ENCODE measurements at regions of chr17 and their contacts with region 1.

Region 1: DNA sequence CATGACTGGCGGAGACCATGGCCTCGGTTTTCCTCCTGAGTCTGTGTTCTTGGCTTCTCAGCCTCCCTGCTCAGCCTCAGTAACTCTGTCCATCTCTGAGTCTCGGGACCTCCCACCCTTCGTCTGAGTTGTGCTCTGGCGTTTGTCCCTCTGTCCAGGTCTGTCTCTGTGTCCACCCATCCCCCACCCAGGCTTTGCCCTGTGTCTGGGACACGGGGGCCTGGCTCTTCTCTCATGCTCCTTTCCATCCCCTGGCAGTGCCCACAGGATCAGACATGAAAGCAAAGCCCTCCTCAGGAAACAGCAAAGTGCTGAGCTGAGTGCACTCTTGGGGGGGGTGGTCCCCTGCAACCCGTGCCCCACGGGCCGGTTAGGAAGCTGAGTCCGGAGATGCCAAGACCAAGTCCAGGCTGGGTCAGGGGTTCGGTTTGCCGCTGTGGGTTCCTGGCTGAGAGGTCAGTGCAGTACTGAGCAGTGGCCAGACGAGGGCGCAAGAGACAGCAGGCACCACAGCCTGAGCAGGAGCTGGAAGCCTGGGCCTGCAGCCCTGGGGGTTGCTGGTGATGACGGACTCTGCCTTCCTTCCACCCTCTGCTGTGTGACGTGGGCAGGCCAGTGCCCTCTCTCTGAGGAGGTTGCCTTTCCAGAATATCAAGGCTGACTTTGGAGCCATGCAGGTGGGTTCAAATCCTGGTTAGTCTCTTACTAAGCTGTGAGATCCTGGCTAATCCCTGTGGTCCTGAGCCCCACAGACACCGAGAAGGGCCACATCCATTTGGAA is 2.5 kb downstream of the P2RX1 start:
- DNase-seq: peak; percentile 82 to 86 (median 86)
- H3K4me3 ChIP-seq: peak overlapping the region; percentile 75 to 92 (median 83)
- H3K27ac ChIP-seq: peak overlapping the region; percentile 97 to 98
- H3K4me1 ChIP-seq: peaks cover 11 to 77% (median 70%) of the 10 kb centered on the region in 4 experiments
- H3K27me3 ChIP-seq: no peaks in the 10 kb centered on the region

Region 2: GRCh38 chr17:3667366-3668278 is 246.1 kb before region 1 on chr17:
- CTCF ChIA-PET with region 1: no interaction called
- POLR2A ChIA-PET with region 1: no interaction called
- DNase-seq: peak in 1 of 3 donors; percentile 19
- H3K4me3 ChIP-seq: peak overlapping the region; percentile 90 to 99 (median 95)
- H3K27ac ChIP-seq: peak overlapping the region in 1 of 2 experiments; percentile 14
- H3K4me1 ChIP-seq: peaks cover 5 to 23% (median 18%) of the 10 kb centered on the region in 4 experiments
- H3K27me3 ChIP-seq: no peaks in the 10 kb centered on the region

Region 3: DNA sequence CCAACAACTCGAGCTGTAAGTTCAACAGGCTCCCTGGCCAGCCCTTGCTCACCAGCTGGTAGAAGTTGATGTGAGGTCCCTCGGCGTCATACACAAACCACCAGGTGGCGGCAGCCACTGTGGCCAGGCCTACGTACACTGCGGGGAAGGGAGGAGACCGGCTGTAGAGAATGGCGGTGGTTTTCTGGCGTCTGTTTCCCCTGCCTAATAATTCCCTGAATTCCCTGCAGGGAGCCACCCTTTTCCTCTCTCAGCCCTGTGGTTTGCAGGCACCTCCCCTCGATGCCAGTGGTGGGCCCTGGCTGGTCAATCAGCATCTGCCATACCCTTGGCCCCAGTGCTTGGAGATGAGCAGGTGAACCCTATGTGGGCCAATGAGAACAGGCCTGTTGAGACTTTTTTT is 21.4 kb after region 1 on chr17:
- CTCF ChIA-PET with region 1: interaction called, 37 read pairs
- POLR2A ChIA-PET with region 1: interaction called, 13 read pairs
- DNase-seq: peak; percentile 83 to 93 (median 92)
- H3K4me3 ChIP-seq: no peak overlapping the region
- H3K27ac ChIP-seq: no peak overlapping the region
- H3K4me1 ChIP-seq: peaks cover 0 to 5% (median 0%) of the 10 kb centered on the region in 4 experiments
- H3K27me3 ChIP-seq: no peaks in the 10 kb centered on the region

Region 4: DNA sequence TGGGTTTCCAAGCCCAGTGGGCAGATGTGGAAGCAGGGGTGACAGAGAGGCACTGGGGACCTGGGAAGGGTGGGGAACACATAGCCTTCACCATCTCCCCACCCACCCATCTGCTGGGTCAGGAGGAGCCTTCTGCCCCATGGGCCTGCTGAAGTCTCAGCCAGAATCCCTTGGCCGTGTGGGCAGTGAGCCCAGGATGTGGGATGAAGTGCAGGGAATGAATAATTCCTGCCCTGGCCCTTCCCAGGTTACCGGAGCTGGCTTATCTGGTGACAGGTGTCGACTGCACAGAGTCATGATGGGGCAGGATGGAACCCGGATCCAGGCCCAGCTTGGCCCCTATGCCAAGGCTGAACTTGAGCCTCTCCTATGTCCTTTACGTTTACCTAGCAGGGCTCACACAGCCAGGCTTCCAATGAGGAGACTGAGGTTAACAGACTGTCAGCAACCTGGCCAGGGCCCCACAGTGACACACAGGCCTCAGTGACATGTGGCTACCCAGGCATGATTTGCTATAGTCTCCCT is 33.1 kb after region 1 on chr17:
- CTCF ChIA-PET with region 1: interaction called, 15 read pairs
- POLR2A ChIA-PET with region 1: no interaction called
- DNase-seq: no peak
- H3K4me3 ChIP-seq: no peak overlapping the region
- H3K27ac ChIP-seq: peak overlapping the region in 1 of 2 experiments; percentile 10
- H3K4me1 ChIP-seq: no peaks in the 10 kb centered on the region
- H3K27me3 ChIP-seq: no peaks in the 10 kb centered on the region

Region 5: DNA sequence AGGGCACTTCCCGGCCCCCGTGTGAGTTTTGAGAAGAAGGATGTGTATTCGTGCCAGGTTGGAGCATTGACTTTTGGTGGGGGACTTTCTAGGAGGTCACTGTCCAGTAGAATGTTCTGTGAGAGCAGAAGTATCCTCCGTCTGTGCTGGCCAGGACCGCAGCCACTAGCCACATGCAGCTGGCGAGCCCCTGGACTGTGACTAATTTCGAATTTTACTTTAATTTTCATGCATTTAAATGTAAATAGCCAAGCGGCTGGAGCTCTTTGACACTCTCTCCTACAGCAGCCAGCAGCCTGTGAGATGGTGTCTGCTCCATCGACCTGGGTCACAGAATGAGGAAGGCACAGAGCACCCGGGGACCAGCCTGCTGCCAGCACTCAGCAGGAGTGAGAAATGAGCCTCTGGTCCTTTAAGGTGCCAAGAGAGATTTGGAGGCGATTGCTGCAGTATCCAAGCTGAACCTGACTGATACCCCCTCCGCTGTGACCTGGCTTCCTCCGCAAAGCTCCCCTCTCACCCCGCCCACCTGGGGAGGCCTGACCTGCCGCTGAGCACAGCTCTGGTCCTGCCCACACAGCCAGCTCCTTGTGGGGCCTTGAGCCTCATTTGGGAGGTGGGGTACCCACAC is 42.7 kb after region 1 on chr17:
- CTCF ChIA-PET with region 1: interaction called, 7 read pairs
- POLR2A ChIA-PET with region 1: interaction called, 12 read pairs
- DNase-seq: peak in 1 of 3 donors; percentile 41
- H3K4me3 ChIP-seq: no peak overlapping the region
- H3K27ac ChIP-seq: no peak overlapping the region
- H3K4me1 ChIP-seq: peaks cover 4 to 46% (median 37%) of the 10 kb centered on the region in 4 experiments
- H3K27me3 ChIP-seq: no peaks in the 10 kb centered on the region

Region 6: GRCh38 chr17:3965118-3965803 is 51.5 kb after region 1 on chr17:
- CTCF ChIA-PET with region 1: interaction called, 9 read pairs
- POLR2A ChIA-PET with region 1: interaction called, 15 read pairs
- DNase-seq: peak; percentile 86 to 93 (median 90)
- H3K4me3 ChIP-seq: peak overlapping the region in 6 of 7 experiments; percentile 77 to 95 (median 86)
- H3K27ac ChIP-seq: peak overlapping the region in 1 of 2 experiments; percentile 75
- H3K4me1 ChIP-seq: peaks cover 8 to 72% (median 67%) of the 10 kb centered on the region in 4 experiments
- H3K27me3 ChIP-seq: no peaks in the 10 kb centered on the region

Measured in common myeloid progenitor, CD34-positive (primary cell).